Heart left ventricle (tissue), 16 donors: ENCODE measurements at regions of chr4 and their contacts with region 1.

Region 1: GRCh38 chr4:140839888-140840790 is 84.0 kb upstream of the TBC1D9 start:
- DNase-seq: peak in 1 of 5 donors; percentile 25
- ATAC-seq: peak in 1 of 4 donors; percentile 44
- H3K4me3 ChIP-seq: no peak overlapping the region
- H3K27ac ChIP-seq: peak overlapping the region in 4 of 12 donors; percentile 1 to 48 (median 24)
- H3K4me1 ChIP-seq: peaks cover 0 to 14% (median 4%) of the 10 kb centered on the region in 12 donors
- H3K27me3 ChIP-seq: no peaks in the 10 kb centered on the region
- CTCF ChIP-seq: no peak
- POLR2A ChIP-seq: no peak

Region 2: DNA sequence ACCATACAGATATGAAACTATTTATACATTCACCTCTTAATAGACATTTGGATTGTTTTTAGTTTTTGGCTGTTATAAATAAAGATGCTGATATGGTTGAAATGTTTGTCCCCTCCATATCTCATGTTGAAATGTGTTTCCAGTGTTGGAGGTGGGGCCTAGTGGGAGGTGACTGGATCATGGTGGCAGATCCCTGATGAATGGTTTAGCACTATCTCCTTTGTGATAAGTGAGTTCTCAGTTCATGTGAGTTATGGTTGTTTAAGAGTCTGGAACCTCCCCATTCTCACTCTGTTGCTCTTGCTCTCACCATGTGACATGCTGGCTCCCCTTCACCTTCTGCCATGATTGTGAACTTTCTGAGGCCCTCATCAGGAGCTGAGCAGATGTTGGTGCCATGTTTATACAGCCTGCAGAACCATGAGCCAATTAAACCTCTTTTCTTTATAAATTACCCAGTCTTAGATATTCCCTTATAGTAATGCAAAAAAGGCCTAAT is 400.4 kb before region 1 on chr4:
- intact Hi-C with region 1: loop called in 1 of 10 experiments (anchors 5 kb)
- DNase-seq: no peak
- ATAC-seq: no peak
- H3K4me3 ChIP-seq: no peak overlapping the region
- H3K27ac ChIP-seq: no peak overlapping the region
- H3K4me1 ChIP-seq: no peaks in the 10 kb centered on the region
- H3K27me3 ChIP-seq: no peaks in the 10 kb centered on the region
- CTCF ChIP-seq: no peak
- POLR2A ChIP-seq: no peak

Region 3: DNA sequence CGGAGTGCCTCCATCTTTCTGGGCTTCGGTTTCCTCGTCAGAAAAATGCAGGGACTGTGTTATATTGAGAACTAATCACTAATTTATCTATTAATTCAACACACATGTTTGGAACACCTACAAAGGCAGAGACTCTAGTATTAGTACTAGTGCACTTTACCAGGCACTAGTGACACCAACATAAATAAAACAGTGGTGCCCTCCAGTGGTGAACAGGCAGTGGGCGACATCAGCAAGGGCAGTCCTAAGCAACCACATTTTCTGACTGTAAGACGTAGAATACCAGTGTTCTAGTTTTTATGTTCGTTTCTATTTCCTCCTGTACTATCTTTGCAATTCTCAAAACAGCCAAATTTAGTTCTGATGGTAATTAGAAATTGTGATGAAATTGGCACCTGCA is 202.3 kb before region 1 on chr4:
- intact Hi-C with region 1: loop called in 3 of 10 experiments (anchors 10 kb)
- DNase-seq: no peak
- ATAC-seq: no peak
- H3K4me3 ChIP-seq: no peak overlapping the region
- H3K27ac ChIP-seq: no peak overlapping the region
- H3K4me1 ChIP-seq: peaks cover 0 to 23% (median 6%) of the 10 kb centered on the region in 12 donors
- H3K27me3 ChIP-seq: no peaks in the 10 kb centered on the region
- CTCF ChIP-seq: peak; percentile 23 to 58 (median 40)
- POLR2A ChIP-seq: no peak

Region 4: GRCh38 chr4:140711910-140712309 is 128.2 kb before region 1 on chr4:
- intact Hi-C with region 1: no loop called
- DNase-seq: no peak
- ATAC-seq: no peak
- H3K4me3 ChIP-seq: no peak overlapping the region
- H3K27ac ChIP-seq: no peak overlapping the region
- H3K4me1 ChIP-seq: peaks cover 0 to 30% (median 18%) of the 10 kb centered on the region in 12 donors
- H3K27me3 ChIP-seq: no peaks in the 10 kb centered on the region
- CTCF ChIP-seq: no peak
- POLR2A ChIP-seq: no peak